ENCODE measurements at regions of chr22 and their contacts with region 1.

Region 1: DNA sequence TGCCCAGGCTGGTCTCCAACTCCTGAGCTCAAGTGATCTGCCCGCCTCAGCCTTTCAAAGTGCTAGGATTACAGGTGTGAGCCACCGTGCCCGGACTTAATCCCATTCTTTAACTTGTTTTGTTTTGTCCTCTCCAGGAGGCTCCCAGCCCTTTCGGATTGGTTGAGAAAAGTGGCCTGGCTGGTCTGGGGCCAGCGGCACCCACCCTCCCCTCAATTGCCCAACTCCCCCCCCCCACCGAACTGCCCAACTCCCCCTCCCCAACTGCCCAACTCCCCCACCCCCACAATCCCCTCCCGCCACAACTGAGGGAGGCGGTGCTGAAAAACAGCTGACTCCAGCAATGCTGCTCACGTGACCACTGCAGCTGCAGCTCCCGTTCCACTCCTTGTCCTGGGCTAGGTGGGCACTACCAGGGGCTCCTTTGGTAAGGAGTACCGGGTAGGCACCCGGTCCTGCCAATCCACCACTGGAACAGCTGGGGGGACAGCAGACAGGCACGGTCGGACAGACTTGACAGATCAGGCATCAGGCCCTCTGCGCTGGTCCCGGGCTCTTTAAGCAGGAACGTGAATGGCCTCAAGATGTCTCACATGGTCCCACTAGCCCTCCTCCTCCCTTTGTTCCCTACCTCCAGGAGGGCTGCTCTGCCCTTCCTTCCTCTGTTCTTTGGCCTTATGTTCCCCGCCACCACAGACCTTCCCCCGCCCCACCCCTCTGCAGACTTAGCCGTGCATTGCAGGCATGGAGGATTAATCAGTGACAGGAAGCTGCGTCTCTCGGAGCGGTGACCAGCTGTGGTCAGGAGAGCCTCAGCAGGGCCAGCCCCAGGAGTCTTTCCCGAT is at the start of gene TCN2:
- DNase-seq: peak; percentile 36
- H3K4me3 Mint-ChIP-seq: peak within 1 kb of the TSS; percentile 51
- H3K27ac Mint-ChIP-seq: peak within 1 kb of the TSS; percentile 84
- H3K4me1 Mint-ChIP-seq: peaks cover 45% of the 10 kb centered on the region
- H3K27me3 Mint-ChIP-seq: peaks cover 1% of the 10 kb centered on the region
- total RNA-seq, gene TCN2: 0.32 to 0.54 TPM

Region 2: DNA sequence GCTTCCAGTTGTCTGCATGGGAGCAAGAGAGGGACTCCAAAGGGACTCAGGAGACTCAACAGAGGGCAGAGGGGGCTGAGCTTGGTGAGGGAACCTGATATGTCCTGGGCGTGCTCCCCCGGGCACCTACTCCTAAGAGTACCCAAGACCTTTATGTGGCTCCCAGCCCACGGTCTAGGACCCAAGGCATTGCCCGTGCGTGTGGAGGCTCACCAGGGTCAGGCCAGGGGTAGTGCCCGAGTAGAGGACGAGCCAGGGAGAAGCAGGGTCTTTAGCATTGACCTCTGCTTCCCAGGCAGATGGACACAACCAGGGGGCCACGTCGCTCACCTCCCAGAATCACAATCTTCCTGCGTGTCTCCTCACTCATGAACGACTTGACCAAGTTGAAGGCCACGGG is 114.5 kb before region 1 on chr22:
- CTCF ChIA-PET with region 1: no interaction called
- POLR2A ChIA-PET with region 1: no interaction called
- DNase-seq: no peak
- H3K4me3 Mint-ChIP-seq: no peak overlapping the region
- H3K27ac Mint-ChIP-seq: no peak overlapping the region
- H3K4me1 Mint-ChIP-seq: no peaks in the 10 kb centered on the region
- H3K27me3 Mint-ChIP-seq: peaks cover 2% of the 10 kb centered on the region

Region 3: GRCh38 chr22:30591588-30592359 is 14.9 kb before region 1 on chr22 and contains the start of gene PES1:
- CTCF ChIA-PET with region 1: interaction called, 10 read pairs
- POLR2A ChIA-PET with region 1: no interaction called
- DNase-seq: peak; percentile 96
- H3K4me3 Mint-ChIP-seq: no peak within 1 kb of the TSS
- H3K27ac Mint-ChIP-seq: no peak within 1 kb of the TSS
- H3K4me1 Mint-ChIP-seq: no peaks in the 10 kb centered on the region
- H3K27me3 Mint-ChIP-seq: peaks cover 5% of the 10 kb centered on the region
- total RNA-seq, gene PES1: 58.5 to 62.7 TPM